ENCODE measurements at regions of chr17 and their contacts with region 1.

Region 1: DNA sequence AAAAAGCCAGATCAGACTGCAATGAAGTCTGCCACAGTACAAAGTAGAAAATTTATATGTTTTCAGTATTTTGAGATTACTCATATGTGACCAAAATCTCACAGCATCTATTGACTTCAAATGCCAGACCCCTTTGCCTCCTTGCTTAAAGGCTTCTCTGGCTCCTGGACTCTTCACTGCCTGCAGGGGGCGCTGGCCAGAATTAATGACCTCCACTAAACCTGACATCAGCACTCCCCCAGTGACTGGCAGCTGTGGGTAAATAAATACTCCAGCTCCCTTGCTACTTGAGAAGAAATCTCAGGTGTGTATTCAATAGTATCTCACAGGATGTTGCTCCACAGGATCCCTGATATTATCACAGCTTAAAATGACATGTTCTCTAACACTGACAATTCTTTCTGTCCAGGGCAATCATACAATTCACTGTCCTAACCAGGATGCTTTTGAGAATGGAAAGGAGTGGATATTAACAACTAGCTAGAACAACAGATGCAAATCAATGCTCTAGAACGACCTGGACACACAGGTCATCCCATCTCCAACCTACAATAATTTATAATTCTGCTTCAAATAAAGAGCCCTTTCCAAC is 4.0 kb downstream of the BECN1 start:
- DNase-seq: no peak
- ATAC-seq: peak; percentile 69
- H3K4me3 ChIP-seq: no peak overlapping the region
- H3K27ac ChIP-seq: no peak overlapping the region
- H3K4me1 ChIP-seq: peaks cover 6% of the 10 kb centered on the region; the same call in 1 of the 2 replicates
- H3K27me3 ChIP-seq: no peaks in the 10 kb centered on the region
- CTCF ChIP-seq: peak; percentile 68 to 88 (median 74)
- EP300 ChIP-seq: no peak
- POLR2A ChIP-seq: no peak
- RAD21 ChIP-seq: peak; percentile 31; the same call in 1 of the 2 replicates

Region 2: DNA sequence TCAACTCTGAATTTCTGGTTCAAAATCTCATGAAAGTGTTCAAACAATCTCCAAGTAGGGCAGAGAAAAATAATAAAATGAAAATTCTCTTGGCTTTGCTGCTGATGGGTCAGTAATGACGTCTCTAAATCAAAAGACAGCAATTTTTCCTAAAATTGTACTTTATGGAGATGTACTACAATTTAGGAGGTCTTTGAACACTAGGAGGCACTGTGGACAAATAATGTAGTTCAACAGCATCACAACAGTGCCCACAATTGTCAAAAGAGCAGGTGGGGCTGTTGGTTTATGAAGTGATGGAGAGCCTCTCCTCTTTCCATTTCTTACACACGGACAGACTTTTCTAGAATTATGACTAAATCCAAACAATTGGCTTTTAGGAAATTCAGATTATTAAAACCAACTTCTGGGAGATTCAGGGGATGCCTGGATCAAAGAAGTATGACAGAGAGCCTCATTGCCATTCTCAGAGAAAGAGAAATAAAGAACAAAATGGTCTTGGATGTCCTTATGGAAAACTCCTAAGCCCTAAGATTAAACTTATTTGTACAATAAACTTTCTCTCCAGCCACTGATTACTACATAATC is 99.0 kb before region 1 on chr17:
- CTCF ChIA-PET with region 1: interaction called, 5 read pairs
- POLR2A ChIA-PET with region 1: no interaction called
- RAD21 ChIA-PET with region 1: interaction called, 3 read pairs
- SMC1A ChIA-PET with region 1: interaction called, 7 read pairs
- in situ Hi-C with region 1: no loop called
- intact Hi-C with region 1: loop called (anchors 2 kb)
- DNase-seq: no peak
- ATAC-seq: peak; percentile 94
- H3K4me3 ChIP-seq: no peak overlapping the region
- H3K27ac ChIP-seq: no peak overlapping the region
- H3K4me1 ChIP-seq: no peaks in the 10 kb centered on the region
- H3K27me3 ChIP-seq: no peaks in the 10 kb centered on the region
- CTCF ChIP-seq: peak; percentile 61 to 83 (median 78); a peak in 5 of 6 replicates
- EP300 ChIP-seq: no peak
- POLR2A ChIP-seq: no peak
- RAD21 ChIP-seq: peak; percentile 73

Region 3: DNA sequence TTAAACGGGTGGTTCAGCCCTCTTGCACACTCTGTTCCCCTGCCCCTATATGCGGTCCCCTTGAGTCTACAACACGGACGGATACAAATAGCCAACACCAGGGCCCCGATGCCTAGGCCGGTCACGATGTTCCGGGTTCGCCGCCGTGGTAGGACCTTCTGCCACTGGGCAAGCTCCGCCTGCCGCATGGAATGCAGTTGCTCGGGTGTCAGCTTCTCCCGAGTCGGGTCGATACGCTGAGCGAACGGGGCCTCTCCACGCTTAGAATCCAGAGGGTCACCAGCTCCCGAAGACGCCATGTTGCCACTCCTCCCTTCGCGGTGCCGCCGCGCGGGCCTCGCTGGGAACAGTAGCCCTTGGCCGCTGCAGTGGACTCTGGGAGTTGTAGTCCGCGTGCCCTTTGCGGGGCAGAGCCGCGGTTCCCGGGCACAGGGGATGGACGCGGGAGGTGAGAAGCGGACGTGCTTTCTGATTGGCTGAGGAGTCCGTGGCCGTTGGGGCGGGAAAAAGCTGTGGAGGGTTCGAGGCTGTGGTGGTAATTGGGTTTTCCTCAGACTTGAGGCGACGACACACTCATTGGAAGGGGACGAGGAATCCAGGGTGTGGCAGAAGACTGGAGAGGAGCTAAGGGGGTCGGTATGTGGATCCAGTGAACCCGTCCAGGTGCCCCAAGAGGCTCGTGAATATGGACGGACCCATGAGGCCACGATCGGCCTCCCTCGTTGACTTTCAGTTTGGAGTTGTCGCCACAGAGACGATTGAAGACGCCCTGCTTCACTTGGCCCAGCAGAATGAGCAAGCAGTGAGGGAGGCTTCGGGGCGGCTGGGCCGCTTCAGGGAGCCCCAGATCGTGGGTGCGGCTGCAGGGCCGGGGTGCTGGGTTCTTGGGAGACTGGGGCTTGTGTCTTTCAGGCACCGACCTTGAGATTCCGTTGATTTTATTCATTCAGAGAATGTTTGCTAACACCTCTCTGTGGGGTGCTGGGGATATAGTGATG is 21.4 kb before region 1 on chr17 and contains the starts of genes CNTD1 and COA3:
- CTCF ChIA-PET with region 1: interaction called, 11 read pairs
- POLR2A ChIA-PET with region 1: no interaction called
- RAD21 ChIA-PET with region 1: interaction called, 3 read pairs
- SMC1A ChIA-PET with region 1: interaction called, 4 read pairs
- in situ Hi-C with region 1: no loop called
- intact Hi-C with region 1: no loop called
- DNase-seq: peak; percentile 31
- ATAC-seq: peak; percentile 100
- H3K4me3 ChIP-seq: peak within 1 kb of the TSS; percentile 76
- H3K27ac ChIP-seq: no peak within 1 kb of the TSS
- H3K4me1 ChIP-seq: peaks cover 10% of the 10 kb centered on the region
- H3K27me3 ChIP-seq: no peaks in the 10 kb centered on the region
- CTCF ChIP-seq: no peak
- EP300 ChIP-seq: no peak
- POLR2A ChIP-seq: peak; percentile 85
- RAD21 ChIP-seq: no peak
- polyA plus RNA-seq, gene CNTD1: 0.80 to 1.4 TPM
- polyA plus RNA-seq, gene COA3: 86.5 to 123 TPM

Region 4: GRCh38 chr17:42832974-42833766 is 13.1 kb after region 1 on chr17 and contains the start of gene PSME3:
- CTCF ChIA-PET with region 1: interaction called, 81 read pairs
- POLR2A ChIA-PET with region 1: interaction called, 25 read pairs
- RAD21 ChIA-PET with region 1: interaction called, 5 read pairs
- SMC1A ChIA-PET with region 1: interaction called, 14 read pairs
- in situ Hi-C with region 1: no loop called
- intact Hi-C with region 1: no loop called
- DNase-seq: peak; percentile 59
- ATAC-seq: peak; percentile 95
- H3K4me3 ChIP-seq: peak within 1 kb of the TSS; percentile 93
- H3K27ac ChIP-seq: peak within 1 kb of the TSS; percentile 92
- H3K4me1 ChIP-seq: peaks cover 5% of the 10 kb centered on the region; the same call in 1 of the 2 replicates
- H3K27me3 ChIP-seq: no peaks in the 10 kb centered on the region
- CTCF ChIP-seq: no peak
- EP300 ChIP-seq: no peak
- POLR2A ChIP-seq: peak; percentile 97
- RAD21 ChIP-seq: no peak
- polyA plus RNA-seq, gene PSME3: 26.9 to 33.8 TPM

Region 5: DNA sequence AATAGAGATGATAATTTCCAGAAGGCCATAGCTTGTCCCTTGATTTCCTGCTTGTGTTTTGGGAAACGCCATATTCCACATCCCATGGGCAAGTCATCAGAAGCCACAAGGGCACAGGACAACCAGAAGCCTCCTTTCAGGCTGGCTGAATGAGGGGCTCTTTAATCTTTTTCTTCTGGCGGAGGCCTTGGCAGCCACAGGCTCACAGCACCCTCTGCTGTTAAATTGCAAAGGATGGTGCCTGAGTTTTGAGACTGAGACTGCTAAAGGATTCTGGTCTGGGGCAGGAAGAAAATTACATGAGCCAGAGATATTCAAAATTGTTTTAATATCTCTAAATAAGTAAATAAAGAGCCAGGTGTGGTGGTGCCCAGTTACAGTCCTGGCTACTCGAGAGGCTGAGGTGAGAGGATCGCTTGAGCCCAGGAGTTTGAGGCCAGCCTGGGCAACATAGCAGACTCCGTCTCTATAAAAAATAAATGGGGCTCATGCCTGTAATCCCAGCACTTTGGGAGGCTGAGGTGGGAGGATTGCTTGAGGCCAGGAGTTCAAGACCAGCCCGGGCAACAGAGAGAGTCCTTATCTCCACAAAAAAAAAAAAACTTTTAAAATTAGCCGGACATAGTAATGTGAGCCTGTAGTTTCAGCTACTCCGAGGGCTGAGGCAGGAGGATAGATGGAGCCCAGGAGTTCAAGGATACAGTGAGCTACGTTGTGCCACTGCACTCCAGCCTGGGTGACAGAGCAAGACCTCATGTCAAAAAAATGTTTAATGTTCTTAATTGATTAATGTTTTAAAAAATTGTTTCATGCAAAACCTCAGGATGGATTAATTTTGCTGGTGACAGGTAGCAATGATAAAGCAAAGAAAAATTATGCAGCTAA is 117.9 kb after region 1 on chr17:
- CTCF ChIA-PET with region 1: interaction called, 11 read pairs
- POLR2A ChIA-PET with region 1: no interaction called
- RAD21 ChIA-PET with region 1: no interaction called
- SMC1A ChIA-PET with region 1: interaction called, 4 read pairs
- in situ Hi-C with region 1: no loop called
- intact Hi-C with region 1: no loop called
- DNase-seq: no peak
- ATAC-seq: peak; percentile 90
- H3K4me3 ChIP-seq: no peak overlapping the region
- H3K27ac ChIP-seq: no peak overlapping the region
- H3K4me1 ChIP-seq: no peaks in the 10 kb centered on the region
- H3K27me3 ChIP-seq: no peaks in the 10 kb centered on the region
- CTCF ChIP-seq: peak; percentile 57 to 79 (median 58)
- EP300 ChIP-seq: no peak
- POLR2A ChIP-seq: no peak
- RAD21 ChIP-seq: peak; percentile 83

Region 6: DNA sequence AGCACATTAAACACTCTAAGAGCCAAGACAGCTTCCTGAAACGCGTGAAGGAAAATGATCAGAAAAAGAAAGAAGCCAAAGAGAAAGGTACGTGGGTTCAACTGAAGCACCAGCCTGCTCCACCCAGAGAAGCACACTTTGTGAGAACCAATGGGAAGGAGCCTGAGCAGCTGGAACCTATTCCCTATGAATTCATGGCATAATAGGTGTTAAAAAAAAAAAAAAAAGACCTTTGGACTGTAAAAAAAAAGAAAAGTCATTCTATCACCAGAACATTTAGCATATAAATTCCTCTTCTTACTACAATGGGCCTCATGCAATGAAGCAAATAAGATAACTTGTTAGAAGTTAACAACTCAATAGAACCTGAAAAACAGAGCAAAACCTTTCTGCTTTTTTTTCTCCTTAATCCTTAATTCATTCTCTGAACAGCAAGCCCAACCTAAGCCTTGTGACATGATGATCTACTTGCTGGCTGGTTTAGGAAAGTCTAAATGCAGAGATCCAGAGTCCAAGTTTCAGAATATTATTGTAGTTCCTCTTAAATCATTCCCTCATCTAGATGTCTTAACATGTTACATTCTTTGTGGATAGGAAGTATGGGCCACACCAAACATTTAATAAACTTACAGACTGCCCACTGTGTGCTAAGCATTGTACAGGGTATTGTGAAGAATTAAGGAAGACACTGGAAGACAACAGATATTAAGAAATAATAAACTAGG is 259.7 kb after region 1 on chr17:
- CTCF ChIA-PET with region 1: no interaction called
- POLR2A ChIA-PET with region 1: no interaction called
- RAD21 ChIA-PET with region 1: no interaction called
- SMC1A ChIA-PET with region 1: no interaction called
- in situ Hi-C with region 1: no loop called
- intact Hi-C with region 1: no loop called
- DNase-seq: no peak
- ATAC-seq: no peak
- H3K4me3 ChIP-seq: no peak overlapping the region
- H3K27ac ChIP-seq: no peak overlapping the region
- H3K4me1 ChIP-seq: no peaks in the 10 kb centered on the region
- H3K27me3 ChIP-seq: no peaks in the 10 kb centered on the region
- CTCF ChIP-seq: no peak
- EP300 ChIP-seq: no peak
- POLR2A ChIP-seq: no peak
- RAD21 ChIP-seq: no peak

Region 7: DNA sequence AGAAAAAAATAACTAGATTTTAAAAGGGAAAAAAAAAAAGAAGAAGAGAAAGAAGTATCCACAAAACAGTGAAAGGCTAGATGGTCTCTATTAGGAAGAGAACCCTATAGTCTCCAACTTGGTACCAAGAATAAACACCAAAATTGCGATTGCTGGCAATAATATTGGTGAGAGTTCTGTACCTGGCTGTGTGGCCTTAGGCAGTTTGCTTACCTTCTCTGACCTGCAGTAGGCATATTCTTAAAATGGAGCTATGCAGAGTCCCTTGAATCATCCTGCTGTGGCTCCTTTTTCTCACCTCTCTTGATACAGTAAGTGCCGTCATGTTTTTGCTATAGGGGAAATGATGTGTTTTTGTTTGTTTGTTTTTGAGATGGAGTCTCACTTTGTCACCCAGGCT is 270.0 kb after region 1 on chr17:
- CTCF ChIA-PET with region 1: no interaction called
- POLR2A ChIA-PET with region 1: no interaction called
- RAD21 ChIA-PET with region 1: no interaction called
- SMC1A ChIA-PET with region 1: no interaction called
- in situ Hi-C with region 1: no loop called
- intact Hi-C with region 1: no loop called
- DNase-seq: no peak
- ATAC-seq: no peak
- H3K4me3 ChIP-seq: no peak overlapping the region
- H3K27ac ChIP-seq: no peak overlapping the region
- H3K4me1 ChIP-seq: no peaks in the 10 kb centered on the region
- H3K27me3 ChIP-seq: no peaks in the 10 kb centered on the region
- CTCF ChIP-seq: no peak
- EP300 ChIP-seq: no peak
- POLR2A ChIP-seq: no peak
- RAD21 ChIP-seq: no peak

Region 8: GRCh38 chr17:43676471-43676870 is 856.4 kb after region 1 on chr17:
- CTCF ChIA-PET with region 1: no interaction called
- POLR2A ChIA-PET with region 1: no interaction called
- RAD21 ChIA-PET with region 1: no interaction called
- SMC1A ChIA-PET with region 1: no interaction called
- in situ Hi-C with region 1: no loop called
- intact Hi-C with region 1: no loop called
- DNase-seq: no peak
- ATAC-seq: no peak
- H3K4me3 ChIP-seq: no peak overlapping the region
- H3K27ac ChIP-seq: no peak overlapping the region
- H3K4me1 ChIP-seq: peaks cover 21% of the 10 kb centered on the region
- H3K27me3 ChIP-seq: no peaks in the 10 kb centered on the region
- CTCF ChIP-seq: no peak
- EP300 ChIP-seq: no peak
- POLR2A ChIP-seq: no peak
- RAD21 ChIP-seq: no peak